PC-3 (cell line): ENCODE measurements at regions of chrX and their contacts with region 1.

Region 1: DNA sequence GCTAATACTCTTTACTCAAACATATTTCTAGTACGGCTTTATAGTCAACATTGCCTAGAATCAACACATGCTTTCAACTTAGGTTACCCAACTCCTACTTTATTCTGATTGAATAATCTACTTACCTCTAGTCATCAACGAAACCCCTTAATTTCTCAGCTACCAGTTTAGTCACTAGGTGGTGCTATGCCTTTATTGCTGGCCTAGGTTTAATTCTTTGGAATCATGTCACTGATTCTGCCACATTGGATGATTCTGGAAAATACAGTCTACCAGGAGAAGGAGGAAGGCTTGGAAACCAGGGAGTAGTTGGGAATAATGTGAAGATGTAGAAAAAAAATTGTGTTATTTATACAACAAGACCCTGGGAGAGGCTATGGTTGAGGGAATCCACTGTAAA is 167.7 kb downstream of the DCAF12L2 start:
- DNase-seq: peak; percentile 47
- ATAC-seq: no peak
- H3K4me3 ChIP-seq: no peak overlapping the region
- H3K27ac ChIP-seq: no peak overlapping the region
- H3K4me1 ChIP-seq: no peaks in the 10 kb centered on the region
- H3K27me3 ChIP-seq: no peaks in the 10 kb centered on the region
- CTCF ChIP-seq: peak; percentile 62

Region 2: DNA sequence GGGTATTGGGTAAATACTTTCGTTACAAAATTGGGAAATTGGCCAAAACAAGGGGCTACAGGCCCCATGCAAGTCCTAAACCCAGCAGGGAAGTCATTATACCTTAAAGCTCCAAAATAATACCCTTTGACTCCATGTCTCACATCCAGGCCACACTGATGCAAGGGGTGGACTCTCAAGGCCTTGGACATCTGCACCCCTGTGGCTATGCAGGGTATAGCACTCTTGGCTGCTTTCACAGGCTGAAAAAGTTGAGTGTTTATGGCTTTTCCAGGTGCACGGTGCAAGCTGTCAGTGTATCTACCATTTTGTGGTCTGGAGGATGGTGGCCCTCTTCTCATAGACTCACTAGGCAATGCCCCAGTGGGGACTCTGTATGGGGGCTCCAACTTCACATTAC is 352.2 kb before region 1 on chrX:
- CTCF ChIA-PET with region 1: no interaction called
- POLR2A ChIA-PET with region 1: no interaction called
- intact Hi-C with region 1: no loop called
- DNase-seq: peak; percentile 1
- ATAC-seq: no peak
- H3K4me3 ChIP-seq: no peak overlapping the region
- H3K27ac ChIP-seq: no peak overlapping the region
- H3K4me1 ChIP-seq: no peaks in the 10 kb centered on the region
- H3K27me3 ChIP-seq: no peaks in the 10 kb centered on the region
- CTCF ChIP-seq: 0 out of 2 replicates have a peak, but pooled peaks have one; percentile 23

Region 3: GRCh38 chrX:126300401-126300800 is 302.0 kb after region 1 on chrX:
- CTCF ChIA-PET with region 1: no interaction called
- POLR2A ChIA-PET with region 1: no interaction called
- intact Hi-C with region 1: no loop called
- DNase-seq: no peak
- ATAC-seq: no peak
- H3K4me3 ChIP-seq: no peak overlapping the region
- H3K27ac ChIP-seq: no peak overlapping the region
- H3K4me1 ChIP-seq: no peaks in the 10 kb centered on the region
- H3K27me3 ChIP-seq: no peaks in the 10 kb centered on the region
- CTCF ChIP-seq: no peak

Region 4: GRCh38 chrX:126741076-126741475 is 742.6 kb after region 1 on chrX:
- CTCF ChIA-PET with region 1: no interaction called
- POLR2A ChIA-PET with region 1: no interaction called
- intact Hi-C with region 1: loop called (anchors 10 kb)
- DNase-seq: peak; percentile 1
- ATAC-seq: no peak
- H3K4me3 ChIP-seq: no peak overlapping the region
- H3K27ac ChIP-seq: no peak overlapping the region
- H3K4me1 ChIP-seq: no peaks in the 10 kb centered on the region
- H3K27me3 ChIP-seq: no peaks in the 10 kb centered on the region
- CTCF ChIP-seq: 0 out of 2 replicates have a peak, but pooled peaks have one; percentile 16